Mammary epithelial cell (primary cell): ENCODE measurements at regions of chr1 and their contacts with region 1.

Region 1: DNA sequence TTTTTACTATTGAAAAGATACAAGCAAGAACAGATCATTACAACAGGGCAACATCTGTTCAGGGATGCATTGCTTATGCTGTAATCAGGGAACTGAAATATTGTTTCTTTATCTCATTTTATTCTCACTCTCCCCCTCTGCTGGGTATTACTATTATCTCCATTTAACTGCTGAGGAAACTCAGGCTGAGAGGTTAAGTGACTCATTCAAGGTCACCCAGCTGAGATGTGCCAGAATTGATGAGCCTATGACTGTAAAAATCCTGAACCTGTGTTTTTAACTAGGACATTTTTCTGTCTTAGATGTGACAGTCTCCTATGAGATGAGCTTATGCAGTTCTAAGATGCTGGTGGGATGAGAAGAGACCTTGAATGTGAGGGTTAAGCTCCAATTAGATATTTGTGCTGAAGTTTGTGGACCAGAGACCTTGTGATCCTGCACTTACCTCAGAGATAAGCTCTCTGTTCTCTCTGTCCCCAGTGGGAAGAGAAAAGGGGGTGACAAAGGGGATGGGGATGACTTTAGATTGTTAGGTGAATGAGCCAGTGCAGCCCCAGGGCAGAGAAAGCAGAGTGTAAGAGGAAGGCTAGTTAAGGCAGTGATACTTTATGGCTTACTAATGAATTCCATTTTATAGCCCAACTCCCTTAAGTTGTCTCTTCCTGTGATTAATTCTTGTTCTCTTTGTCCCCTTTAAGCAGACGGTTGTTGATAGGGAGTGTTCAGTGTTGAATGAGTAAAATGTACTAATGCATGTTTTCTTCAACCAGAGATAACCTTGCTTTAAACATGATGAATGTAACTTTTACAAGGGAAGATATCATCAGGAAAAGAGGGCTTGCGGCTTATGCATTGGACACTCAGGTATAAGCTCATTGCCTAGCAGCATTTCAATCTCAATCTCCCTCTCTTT is 111.4 kb downstream of the HLX start:
- DNase-seq: peak; percentile 29
- H3K4me3 ChIP-seq: no peak overlapping the region
- H3K27ac ChIP-seq: no peak overlapping the region
- H3K4me1 ChIP-seq: no peaks in the 10 kb centered on the region
- H3K27me3 ChIP-seq: peaks cover 9% of the 10 kb centered on the region
- CTCF ChIP-seq: peak in 1 of 2 donors; percentile 23

Region 2: GRCh38 chr1:220879076-220879508 is 111.6 kb before region 1 on chr1 and contains the start of gene HLX:
- CTCF ChIA-PET with region 1: no interaction called
- dilution Hi-C with region 1: no loop called
- in situ Hi-C with region 1: no loop called
- intact Hi-C with region 1: loop called (anchors 2 kb)
- DNase-seq: peak; percentile 60
- H3K4me3 ChIP-seq: peak within 1 kb of the TSS; percentile 55 to 72 (median 58)
- H3K27ac ChIP-seq: no peak within 1 kb of the TSS
- H3K4me1 ChIP-seq: peaks cover 12% of the 10 kb centered on the region
- H3K27me3 ChIP-seq: peaks cover 45% of the 10 kb centered on the region
- CTCF ChIP-seq: no peak
- total RNA-seq, gene HLX: 0.33 to 0.61 TPM

Region 3: DNA sequence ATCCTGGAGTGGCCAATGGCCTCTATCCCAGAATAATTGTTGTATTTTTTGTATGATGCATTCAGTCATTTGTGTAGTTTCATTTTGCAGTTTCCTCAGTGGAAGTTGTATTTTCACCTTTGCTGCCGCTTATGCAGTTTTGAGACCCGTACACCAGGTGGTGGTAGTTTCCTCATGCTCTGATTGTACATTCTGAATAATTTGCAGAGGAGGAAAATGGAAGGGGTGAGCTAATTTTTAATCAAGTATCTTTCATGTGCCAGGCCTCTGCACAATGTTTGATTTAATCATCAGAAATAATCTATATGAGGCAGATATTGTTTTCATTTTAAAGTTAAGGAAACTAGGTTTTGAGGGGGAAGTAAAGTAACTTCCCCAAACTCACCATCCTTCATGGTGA is 81.9 kb before region 1 on chr1:
- CTCF ChIA-PET with region 1: no interaction called
- dilution Hi-C with region 1: no loop called
- in situ Hi-C with region 1: no loop called
- intact Hi-C with region 1: loop called (anchors 1 kb)
- DNase-seq: no peak
- H3K4me3 ChIP-seq: no peak overlapping the region
- H3K27ac ChIP-seq: no peak overlapping the region
- H3K4me1 ChIP-seq: peaks cover 5% of the 10 kb centered on the region
- H3K27me3 ChIP-seq: no peaks in the 10 kb centered on the region
- CTCF ChIP-seq: peak; percentile 47 to 67